Activated naive CD4-positive, alpha-beta T cell treated with anti-CD3 and anti-CD28 coated beads for 36 hours (primary cell): ENCODE measurements at regions of chr14 and their contacts with region 1.

Region 1: GRCh38 chr14:94129111-94129757 is at the start of gene IFI27L2:
- DNase-seq: peak; percentile 88
- H3K4me3 Mint-ChIP-seq: peak within 1 kb of the TSS; percentile 88
- H3K27ac Mint-ChIP-seq: peak within 1 kb of the TSS; percentile 68
- H3K4me1 Mint-ChIP-seq: peaks cover 16% of the 10 kb centered on the region
- H3K27me3 Mint-ChIP-seq: no peaks in the 10 kb centered on the region
- total RNA-seq, gene IFI27L2: 67.0 to 73.4 TPM

Region 2: DNA sequence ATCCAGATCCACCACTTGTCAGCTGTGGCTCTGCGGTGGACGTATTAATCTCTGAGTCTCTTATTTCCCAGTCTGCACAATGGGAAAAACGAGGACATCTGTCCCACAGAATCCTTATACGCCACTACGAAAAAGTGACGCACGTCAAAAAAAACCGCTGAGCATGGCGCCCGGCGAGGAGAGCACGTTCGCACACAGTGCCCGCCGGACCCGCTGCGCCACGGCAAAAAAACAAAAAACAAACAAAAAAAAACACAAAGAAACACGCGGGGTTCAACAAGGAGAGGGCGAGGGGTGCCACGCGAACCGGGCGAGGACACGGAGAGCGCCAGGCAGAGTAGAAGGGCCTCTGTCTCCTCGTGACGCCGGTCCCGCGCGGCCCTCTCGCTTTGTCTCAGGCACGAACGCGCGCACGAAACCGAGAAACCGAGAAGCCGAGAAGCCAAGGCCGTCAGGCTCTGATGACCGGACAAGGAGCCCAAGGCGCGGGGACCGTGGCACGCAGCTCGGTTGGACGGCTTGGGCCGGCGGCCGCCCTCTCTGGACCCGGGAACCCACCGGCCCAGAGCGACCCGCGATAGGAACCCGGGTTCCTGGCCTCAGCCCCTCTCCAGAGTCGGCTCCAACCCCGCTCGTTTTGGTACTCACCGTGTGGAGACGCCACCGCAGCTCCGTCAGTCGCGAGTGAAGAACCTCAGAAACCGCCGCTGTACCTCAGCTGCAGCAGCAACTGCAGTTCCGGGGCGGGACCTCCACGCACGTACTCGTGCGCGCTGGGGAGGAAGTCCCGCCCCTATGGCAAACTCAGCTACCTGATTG is 48.6 kb before region 1 on chr14 and contains the start of gene DDX24:
- CTCF ChIA-PET with region 1: interaction called, 12 read pairs
- intact Hi-C with region 1: loop called (anchors 1 kb)
- DNase-seq: peak; percentile 98
- H3K4me3 Mint-ChIP-seq: peak within 1 kb of the TSS; percentile 98
- H3K27ac Mint-ChIP-seq: peak within 1 kb of the TSS; percentile 98
- H3K4me1 Mint-ChIP-seq: peaks cover 44% of the 10 kb centered on the region
- H3K27me3 Mint-ChIP-seq: no peaks in the 10 kb centered on the region
- total RNA-seq, gene DDX24: 190 to 200 TPM

Region 3: GRCh38 chr14:94161981-94162380 is 32.7 kb after region 1 on chr14:
- CTCF ChIA-PET with region 1: interaction called, 15 read pairs
- intact Hi-C with region 1: no loop called
- DNase-seq: peak; percentile 32
- H3K4me3 Mint-ChIP-seq: no peak overlapping the region
- H3K27ac Mint-ChIP-seq: peak overlapping the region; percentile 38
- H3K4me1 Mint-ChIP-seq: peaks cover 74% of the 10 kb centered on the region
- H3K27me3 Mint-ChIP-seq: peaks cover 2% of the 10 kb centered on the region

Region 4: GRCh38 chr14:94307410-94307992 is 178.3 kb after region 1 on chr14:
- CTCF ChIA-PET with region 1: interaction called, 12 read pairs
- intact Hi-C with region 1: loop called (anchors 1 kb)
- DNase-seq: no peak
- H3K4me3 Mint-ChIP-seq: no peak overlapping the region
- H3K27ac Mint-ChIP-seq: no peak overlapping the region
- H3K4me1 Mint-ChIP-seq: no peaks in the 10 kb centered on the region
- H3K27me3 Mint-ChIP-seq: peaks cover 15% of the 10 kb centered on the region

Region 5: DNA sequence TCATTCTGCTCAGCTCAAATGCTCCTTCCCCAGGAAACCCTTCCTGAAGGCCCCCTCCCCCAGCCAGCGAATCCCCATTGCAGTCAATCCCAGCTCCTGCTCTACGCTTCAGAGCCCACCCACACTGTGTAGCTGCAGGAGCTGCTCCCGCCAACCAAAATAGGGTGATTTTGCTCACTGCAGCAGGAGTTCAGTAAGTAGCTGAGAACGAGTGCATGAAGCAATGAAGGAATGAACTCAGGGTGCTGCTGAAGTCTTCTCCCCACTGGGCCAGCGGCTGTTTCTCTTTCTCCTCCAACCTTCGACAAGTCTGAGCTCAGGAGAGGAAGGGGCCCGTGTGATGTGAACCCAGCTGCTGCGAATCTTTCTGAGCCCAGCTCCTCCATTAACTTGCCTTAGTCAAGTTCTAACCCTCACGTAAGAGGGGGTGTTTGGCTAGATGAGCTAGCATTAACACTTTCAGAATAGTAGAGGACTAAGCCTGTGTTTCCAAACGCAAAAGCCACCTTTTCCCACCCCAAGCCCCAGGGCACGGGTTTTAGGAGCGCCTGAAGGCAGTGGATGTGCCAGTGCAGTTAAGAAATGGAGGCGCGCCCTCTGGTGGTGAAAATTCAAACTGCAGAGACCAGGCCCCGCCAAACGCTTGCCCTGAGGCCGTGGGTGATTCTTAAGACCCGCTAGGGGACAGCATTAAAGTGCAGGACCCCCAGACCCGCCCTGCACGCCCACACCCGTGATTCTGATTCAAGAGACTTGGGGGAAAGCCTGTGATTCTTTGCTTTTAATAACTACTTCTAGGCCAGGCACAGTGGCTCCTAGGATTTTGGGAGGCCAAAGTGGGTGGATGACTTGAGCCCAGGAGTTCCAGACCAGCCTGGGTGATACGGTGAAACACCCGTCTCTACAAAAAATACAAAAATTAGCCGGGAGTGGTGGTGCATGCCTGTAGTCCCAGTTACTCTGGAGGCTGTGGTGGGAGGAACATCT is 420.1 kb after region 1 on chr14:
- CTCF ChIA-PET with region 1: interaction called, 3 read pairs
- intact Hi-C with region 1: loop called (anchors 2 kb)
- DNase-seq: peak; percentile 75
- H3K4me3 Mint-ChIP-seq: no peak overlapping the region
- H3K27ac Mint-ChIP-seq: no peak overlapping the region
- H3K4me1 Mint-ChIP-seq: no peaks in the 10 kb centered on the region
- H3K27me3 Mint-ChIP-seq: peaks cover 26% of the 10 kb centered on the region